CD8-positive, alpha-beta memory T cell (primary cell): ENCODE measurements at regions of chr5 and their contacts with region 1.

Region 1: DNA sequence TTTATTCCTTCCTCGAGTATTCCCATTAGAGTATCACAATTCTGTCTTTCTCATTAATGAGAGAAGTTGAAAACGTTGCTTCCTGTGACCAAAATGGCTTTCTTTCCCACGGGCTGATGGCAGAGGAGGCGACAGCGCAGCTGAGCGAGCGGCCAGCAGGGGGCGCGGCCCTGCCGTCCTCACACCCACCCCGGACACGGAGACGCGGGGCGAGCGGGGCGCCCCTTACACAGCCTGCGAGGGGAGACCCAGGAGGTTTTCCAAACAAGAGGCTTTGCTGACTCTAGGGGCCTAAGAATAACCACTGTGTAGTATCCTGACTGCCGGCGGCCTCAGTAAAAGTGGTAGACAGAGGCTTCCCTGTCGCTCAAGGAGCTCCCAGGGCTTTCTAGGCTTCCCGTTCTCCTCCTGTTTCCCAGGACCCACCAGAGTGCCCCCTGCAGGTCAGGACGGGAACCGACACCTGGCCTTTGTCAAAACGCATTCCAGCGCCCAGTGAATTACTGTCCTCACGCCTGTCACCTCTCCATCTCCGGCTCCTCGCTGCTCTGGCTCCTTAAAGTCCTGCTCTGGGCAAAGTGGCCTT is 27.3 kb upstream of the FGF1 start:
- DNase-seq: peak; percentile 74 to 89 (median 85)
- H3K4me3 ChIP-seq: peak overlapping the region; percentile 48
- H3K4me3 Mint-ChIP-seq: peak overlapping the region; percentile 40 to 83 (median 75)
- H3K27ac ChIP-seq: no peak overlapping the region
- H3K27ac Mint-ChIP-seq: peak overlapping the region in 5 of 8 donors; percentile 2 to 84 (median 26)
- H3K4me1 ChIP-seq: peaks cover 13% of the 10 kb centered on the region
- H3K4me1 Mint-ChIP-seq: peaks cover 20 to 22% (median 22%) of the 10 kb centered on the region in 3 donors
- H3K27me3 ChIP-seq: no peaks in the 10 kb centered on the region
- H3K27me3 Mint-ChIP-seq: peaks cover 0 to 5% of the 10 kb centered on the region in 2 donors

Region 2: DNA sequence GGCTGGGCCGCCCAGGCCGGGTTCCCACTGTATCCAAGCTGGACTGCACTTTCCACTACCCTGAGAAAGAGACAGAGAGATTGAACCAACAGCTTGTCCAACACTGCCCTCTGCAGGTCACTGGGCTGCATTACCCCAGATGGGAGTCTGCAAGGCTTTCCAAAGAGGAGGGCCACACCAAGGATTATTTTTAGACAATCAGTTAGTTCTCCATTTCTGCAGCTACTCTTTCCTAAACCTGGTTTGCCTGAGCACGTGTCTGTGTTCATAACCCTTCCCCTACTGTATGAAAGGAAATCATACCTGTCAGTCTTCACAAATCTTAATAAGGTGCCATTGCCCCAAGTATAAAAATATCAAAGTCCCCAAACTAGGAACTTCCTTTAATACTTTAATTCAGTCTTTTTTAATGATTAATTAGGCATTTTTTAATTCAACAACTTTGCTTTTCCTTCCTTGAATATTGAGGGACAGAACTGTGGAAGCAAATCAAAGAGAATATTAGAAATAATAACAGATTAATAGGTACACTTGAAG is 14.0 kb before region 1 on chr5:
- CTCF ChIA-PET with region 1: interaction called, 24 read pairs
- POLR2A ChIA-PET with region 1: no interaction called
- DNase-seq: peak; percentile 50 to 78 (median 61)
- H3K4me3 ChIP-seq: no peak overlapping the region
- H3K4me3 Mint-ChIP-seq: no peak overlapping the region
- H3K27ac ChIP-seq: no peak overlapping the region
- H3K27ac Mint-ChIP-seq: no peak overlapping the region
- H3K4me1 ChIP-seq: no peaks in the 10 kb centered on the region
- H3K4me1 Mint-ChIP-seq: no peaks in the 10 kb centered on the region
- H3K27me3 ChIP-seq: no peaks in the 10 kb centered on the region
- H3K27me3 Mint-ChIP-seq: peaks cover 3 to 12% of the 10 kb centered on the region in 2 donors

Region 3: GRCh38 chr5:142740474-142741242 is 27.4 kb after region 1 on chr5:
- CTCF ChIA-PET with region 1: interaction called, 14 read pairs
- POLR2A ChIA-PET with region 1: no interaction called
- DNase-seq: no peak
- H3K4me3 ChIP-seq: no peak overlapping the region
- H3K4me3 Mint-ChIP-seq: no peak overlapping the region
- H3K27ac ChIP-seq: no peak overlapping the region
- H3K27ac Mint-ChIP-seq: no peak overlapping the region
- H3K4me1 ChIP-seq: no peaks in the 10 kb centered on the region
- H3K4me1 Mint-ChIP-seq: peaks cover 21 to 24% (median 22%) of the 10 kb centered on the region in 3 donors
- H3K27me3 ChIP-seq: no peaks in the 10 kb centered on the region
- H3K27me3 Mint-ChIP-seq: peaks cover 3 to 8% of the 10 kb centered on the region in 2 donors

Region 4: GRCh38 chr5:142769741-142770631 is 56.8 kb after region 1 on chr5 and contains the start of gene ARHGAP26:
- CTCF ChIA-PET with region 1: interaction called, 32 read pairs
- POLR2A ChIA-PET with region 1: interaction called, 3 read pairs
- DNase-seq: peak; percentile 90 to 95 (median 92)
- H3K4me3 ChIP-seq: peak within 1 kb of the TSS; percentile 89
- H3K4me3 Mint-ChIP-seq: peak within 1 kb of the TSS; percentile 93 to 98 (median 96)
- H3K27ac ChIP-seq: peak within 1 kb of the TSS; percentile 75
- H3K27ac Mint-ChIP-seq: peak within 1 kb of the TSS; percentile 83 to 98 (median 96)
- H3K4me1 ChIP-seq: peaks cover 33% of the 10 kb centered on the region
- H3K4me1 Mint-ChIP-seq: peaks cover 39 to 46% (median 44%) of the 10 kb centered on the region in 3 donors
- H3K27me3 ChIP-seq: no peaks in the 10 kb centered on the region
- H3K27me3 Mint-ChIP-seq: no peaks in the 10 kb centered on the region
- total RNA-seq, gene ARHGAP26: 16.7 to 19.7 TPM

Region 5: DNA sequence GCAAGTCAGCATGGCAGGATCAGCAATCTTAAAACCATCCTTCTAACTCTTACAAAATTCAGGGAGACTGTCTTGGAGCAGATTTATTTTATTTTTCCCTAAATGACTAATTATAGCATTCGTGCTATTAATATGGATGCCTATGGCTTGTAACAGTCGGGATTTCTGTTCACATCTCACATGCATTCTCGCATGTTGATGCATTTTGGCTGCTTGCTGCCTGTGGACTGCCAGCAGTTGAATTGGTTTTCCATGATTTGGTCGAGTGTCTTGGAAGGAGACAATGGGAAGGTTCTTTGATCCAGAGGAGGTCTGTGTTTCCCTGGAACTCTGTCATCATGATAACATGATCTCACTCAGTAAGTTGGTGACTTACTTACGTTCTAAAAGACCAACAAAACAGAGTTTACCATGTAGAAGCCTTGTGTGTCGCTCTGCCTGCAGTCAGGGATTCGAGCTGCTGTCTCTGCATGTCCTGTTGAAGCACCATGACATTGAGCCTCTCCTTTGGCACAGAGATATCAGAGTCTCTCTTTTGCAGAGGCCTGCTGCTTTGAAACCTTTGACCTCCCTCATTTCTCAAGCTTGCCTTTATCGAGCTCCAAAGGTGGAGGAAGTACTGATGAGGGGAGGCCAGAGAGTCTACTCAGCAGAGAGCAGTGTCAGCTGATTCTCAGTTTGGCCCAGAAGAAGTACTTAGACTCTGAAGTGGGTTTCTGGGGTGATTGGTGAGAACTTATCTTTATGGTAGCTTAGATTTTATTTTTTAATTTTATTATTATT is 139.4 kb after region 1 on chr5:
- CTCF ChIA-PET with region 1: interaction called, 11 read pairs
- POLR2A ChIA-PET with region 1: no interaction called
- DNase-seq: no peak
- H3K4me3 ChIP-seq: no peak overlapping the region
- H3K4me3 Mint-ChIP-seq: no peak overlapping the region
- H3K27ac ChIP-seq: no peak overlapping the region
- H3K27ac Mint-ChIP-seq: no peak overlapping the region
- H3K4me1 ChIP-seq: peaks cover 15% of the 10 kb centered on the region
- H3K4me1 Mint-ChIP-seq: peaks cover 85 to 94% (median 92%) of the 10 kb centered on the region in 3 donors
- H3K27me3 ChIP-seq: no peaks in the 10 kb centered on the region
- H3K27me3 Mint-ChIP-seq: no peaks in the 10 kb centered on the region

Region 6: GRCh38 chr5:142874537-142874936 is 161.3 kb after region 1 on chr5:
- CTCF ChIA-PET with region 1: interaction called, 143 read pairs
- POLR2A ChIA-PET with region 1: no interaction called
- DNase-seq: no peak
- H3K4me3 ChIP-seq: no peak overlapping the region
- H3K4me3 Mint-ChIP-seq: no peak overlapping the region
- H3K27ac ChIP-seq: no peak overlapping the region
- H3K27ac Mint-ChIP-seq: peak overlapping the region in 1 of 8 donors; percentile 4
- H3K4me1 ChIP-seq: no peaks in the 10 kb centered on the region
- H3K4me1 Mint-ChIP-seq: peaks cover 30 to 35% (median 30%) of the 10 kb centered on the region in 3 donors
- H3K27me3 ChIP-seq: no peaks in the 10 kb centered on the region
- H3K27me3 Mint-ChIP-seq: no peaks in the 10 kb centered on the region

Region 7: GRCh38 chr5:142888469-142889085 is 175.4 kb after region 1 on chr5:
- CTCF ChIA-PET with region 1: interaction called, 143 read pairs
- POLR2A ChIA-PET with region 1: no interaction called
- DNase-seq: peak in 2 of 5 donors; percentile 9 to 21
- H3K4me3 ChIP-seq: no peak overlapping the region
- H3K4me3 Mint-ChIP-seq: no peak overlapping the region
- H3K27ac ChIP-seq: no peak overlapping the region
- H3K27ac Mint-ChIP-seq: peak overlapping the region in 2 of 8 donors; percentile 16 to 64
- H3K4me1 ChIP-seq: no peaks in the 10 kb centered on the region
- H3K4me1 Mint-ChIP-seq: peaks cover 39 to 47% (median 43%) of the 10 kb centered on the region in 3 donors
- H3K27me3 ChIP-seq: no peaks in the 10 kb centered on the region
- H3K27me3 Mint-ChIP-seq: no peaks in the 10 kb centered on the region